GM10248 (cell line): ENCODE measurements at regions of chr16 and their contacts with region 1.

Region 1: DNA sequence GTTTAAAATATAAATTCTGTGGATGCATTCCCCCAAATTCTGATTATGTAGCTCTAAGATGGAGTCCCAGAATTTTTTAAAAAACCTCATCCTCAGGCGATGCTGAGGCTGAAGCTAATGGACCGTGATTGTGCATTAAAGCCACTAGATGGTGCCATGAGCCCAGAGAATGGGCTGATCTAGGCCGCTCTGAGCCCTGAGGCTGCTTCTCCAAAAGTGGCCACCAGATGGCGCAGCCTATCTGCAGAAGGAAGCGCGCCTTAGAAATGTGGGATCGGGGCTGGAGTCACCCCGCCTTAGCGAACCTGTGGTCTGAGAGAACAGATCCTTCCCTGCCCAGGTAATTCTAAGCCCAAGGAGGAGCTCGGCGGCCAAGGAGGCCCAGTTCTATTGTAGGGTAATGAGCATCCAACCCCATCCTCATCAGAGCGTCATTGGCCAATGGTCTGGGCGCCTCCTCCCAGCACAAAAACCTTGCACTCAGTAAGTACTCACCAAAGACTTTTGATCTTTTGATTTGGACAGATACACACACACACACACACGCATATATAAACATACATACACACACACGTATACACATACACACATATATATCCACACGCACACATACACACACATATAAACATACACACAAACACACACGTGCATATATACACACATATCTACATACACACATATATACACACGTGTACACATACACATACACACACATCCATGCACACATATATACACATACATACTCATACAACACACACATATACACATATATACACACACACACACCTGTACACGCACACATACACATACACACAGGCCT is 13.7 kb upstream of the MMP2 start:
- DNase-seq: peak; percentile 85
- CTCF ChIP-seq: peak; percentile 100

Region 2: GRCh38 chr16:55444754-55445485 is 20.4 kb before region 1 on chr16:
- CTCF ChIA-PET with region 1: interaction called, 81 read pairs
- POLR2A ChIA-PET with region 1: no interaction called
- DNase-seq: peak; percentile 46
- CTCF ChIP-seq: no peak

Region 3: DNA sequence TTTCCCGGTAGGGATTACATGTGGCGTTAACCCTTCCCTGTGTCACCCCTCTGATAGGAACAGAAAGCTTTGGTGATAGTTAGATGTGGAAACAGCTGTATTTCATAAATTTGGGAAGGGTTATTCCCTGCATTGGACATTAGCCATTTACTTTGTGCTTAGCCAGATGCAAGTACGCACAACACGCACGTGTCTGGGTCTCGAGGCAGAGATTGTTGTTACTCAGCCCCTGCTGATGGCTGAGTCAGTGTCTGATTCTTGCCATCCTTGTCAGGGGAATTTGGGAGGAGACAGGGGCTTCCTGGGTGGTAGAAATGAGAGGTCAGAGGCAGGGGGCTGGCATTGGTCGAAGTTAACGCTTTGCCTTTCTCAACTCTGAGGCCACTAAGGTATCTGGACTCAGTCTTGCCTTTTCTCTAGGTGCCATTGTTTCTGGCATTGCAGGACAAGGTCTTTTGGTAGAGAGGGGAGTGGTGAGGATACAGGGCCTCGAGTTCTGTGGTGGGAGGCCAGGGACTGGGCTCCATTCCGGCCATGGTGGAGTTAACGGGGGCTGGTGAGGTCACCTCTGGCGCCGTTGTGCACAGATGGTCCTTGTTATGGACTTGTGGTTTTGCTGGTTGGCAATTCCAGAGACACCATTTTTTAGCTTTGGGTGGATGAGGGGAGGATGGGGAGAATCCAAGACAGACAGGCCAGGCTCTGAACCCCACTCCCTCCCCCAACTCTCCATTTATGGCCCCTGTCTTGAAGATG is 21.9 kb after region 1 on chr16:
- CTCF ChIA-PET with region 1: interaction called, 12 read pairs
- POLR2A ChIA-PET with region 1: no interaction called
- DNase-seq: no peak
- CTCF ChIP-seq: no peak

Region 4: GRCh38 chr16:55543472-55543871 is 78.2 kb after region 1 on chr16:
- CTCF ChIA-PET with region 1: interaction called, 14 read pairs
- POLR2A ChIA-PET with region 1: no interaction called
- DNase-seq: no peak
- CTCF ChIP-seq: no peak

Region 5: DNA sequence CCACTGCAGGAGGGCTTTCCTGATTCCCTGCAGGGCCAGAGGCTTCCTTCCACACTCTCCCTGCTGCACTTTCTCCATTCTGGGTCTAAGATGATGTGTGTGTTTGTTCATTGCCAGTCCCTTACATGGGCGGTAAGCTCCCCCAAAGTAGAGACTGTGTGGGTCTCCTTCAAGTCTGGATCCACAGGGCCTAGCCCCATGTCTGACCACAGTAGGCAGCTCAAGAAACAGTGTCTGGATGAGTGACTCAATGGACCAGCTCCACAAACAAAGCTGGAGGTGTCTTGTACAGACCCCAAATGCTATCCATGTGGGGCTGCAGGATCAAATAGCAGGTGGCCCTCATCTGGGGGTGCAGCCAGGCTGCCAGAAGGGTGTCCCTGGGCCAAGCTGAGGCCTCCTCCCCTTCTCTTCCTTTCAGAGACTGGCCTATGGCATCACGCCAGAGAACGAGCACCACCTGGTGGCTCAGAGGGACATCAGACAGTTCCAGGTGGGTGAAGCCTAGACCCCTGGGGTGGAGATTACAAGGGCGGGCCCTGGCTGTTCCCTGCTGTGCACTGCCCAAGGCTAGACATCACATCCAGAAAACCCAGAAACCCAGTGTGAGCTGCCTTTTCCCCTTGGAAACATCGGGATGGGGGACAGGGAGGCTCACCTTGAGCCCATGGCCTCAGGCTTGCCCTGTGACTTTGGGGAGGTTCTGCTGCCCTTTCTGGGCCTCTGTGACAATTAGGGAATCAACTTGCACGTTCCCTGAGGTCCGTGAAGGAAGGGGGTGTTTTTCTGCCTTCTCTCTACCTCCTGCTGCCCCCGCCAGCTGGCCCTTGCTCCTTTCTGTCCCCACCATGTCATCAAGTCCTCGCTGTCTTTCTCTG is 236.4 kb after region 1 on chr16:
- CTCF ChIA-PET with region 1: interaction called, 176 read pairs
- POLR2A ChIA-PET with region 1: no interaction called
- DNase-seq: peak; percentile 60
- CTCF ChIP-seq: peak; percentile 63

Region 6: GRCh38 chr16:55849536-55849935 is 384.2 kb after region 1 on chr16:
- CTCF ChIA-PET with region 1: interaction called, 10 read pairs
- POLR2A ChIA-PET with region 1: no interaction called
- DNase-seq: no peak
- CTCF ChIP-seq: no peak